ENCODE measurements at regions of chr22 and their contacts with region 1.

Region 1: GRCh38 chr22:37316875-37317371 is 34.6 kb downstream of the CYTH4 start:
- DNase-seq: peak; percentile 78
- H3K4me3 ChIP-seq: no peak overlapping the region
- H3K27ac ChIP-seq: no peak overlapping the region
- H3K4me1 ChIP-seq: no peaks in the 10 kb centered on the region
- H3K27me3 ChIP-seq: no peaks in the 10 kb centered on the region
- CTCF ChIP-seq: peak; percentile 82

Region 2: GRCh38 chr22:37428649-37429586 is 112.0 kb after region 1 on chr22:
- intact Hi-C with region 1: loop called (anchors 2 kb)
- DNase-seq: peak; percentile 45
- H3K4me3 ChIP-seq: no peak overlapping the region
- H3K27ac ChIP-seq: no peak overlapping the region
- H3K4me1 ChIP-seq: no peaks in the 10 kb centered on the region
- H3K27me3 ChIP-seq: peaks cover 30% of the 10 kb centered on the region
- CTCF ChIP-seq: peak; percentile 82

Region 3: DNA sequence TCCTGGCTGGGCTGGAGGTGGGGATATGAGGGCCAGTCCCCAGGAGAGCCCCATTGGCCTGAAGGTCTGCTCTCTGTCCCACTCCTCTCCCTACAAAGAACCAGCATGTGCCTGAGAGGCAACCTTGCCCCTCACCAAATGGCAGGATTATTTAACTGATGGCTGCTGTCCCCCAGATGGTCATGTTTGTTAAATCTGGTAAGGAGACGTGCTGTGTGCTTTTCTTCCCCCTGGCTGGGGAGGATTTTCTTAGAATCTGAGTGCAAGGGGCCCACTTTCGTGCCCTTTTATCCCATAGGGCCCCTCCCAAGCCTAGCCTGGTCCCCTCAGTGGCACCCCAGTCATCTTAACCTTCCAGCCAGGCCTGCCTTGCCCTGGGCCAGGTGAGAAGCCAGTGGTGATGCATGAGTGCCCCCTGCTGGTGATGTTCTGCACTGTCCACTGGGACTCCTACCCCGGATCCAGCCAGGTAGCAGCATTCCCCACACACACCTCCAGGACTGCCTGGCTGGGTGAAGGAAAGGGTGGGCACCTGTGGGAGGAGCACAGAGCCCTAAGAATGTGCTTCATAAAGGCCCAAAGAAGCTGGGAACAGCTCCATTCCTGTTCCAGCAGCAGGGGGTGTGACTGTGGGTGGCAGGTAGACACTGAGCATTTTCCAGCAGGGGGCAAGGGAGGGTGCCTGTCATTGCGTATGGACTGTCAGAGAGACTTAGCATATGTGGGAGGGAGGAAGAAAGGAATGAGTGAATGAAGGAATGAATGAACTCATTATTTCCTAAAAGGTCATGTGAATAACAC is 140.4 kb after region 1 on chr22:
- intact Hi-C with region 1: loop called (anchors 1 kb)
- DNase-seq: peak; percentile 86
- H3K4me3 ChIP-seq: no peak overlapping the region
- H3K27ac ChIP-seq: no peak overlapping the region
- H3K4me1 ChIP-seq: no peaks in the 10 kb centered on the region
- H3K27me3 ChIP-seq: no peaks in the 10 kb centered on the region
- CTCF ChIP-seq: peak; percentile 81

Region 4: GRCh38 chr22:37533995-37534394 is 217.1 kb after region 1 on chr22:
- intact Hi-C with region 1: no loop called
- DNase-seq: no peak
- H3K4me3 ChIP-seq: no peak overlapping the region
- H3K27ac ChIP-seq: no peak overlapping the region
- H3K4me1 ChIP-seq: peaks cover 8% of the 10 kb centered on the region
- H3K27me3 ChIP-seq: no peaks in the 10 kb centered on the region
- CTCF ChIP-seq: no peak